Activated CD4-positive, alpha-beta T cell treated with anti-CD3 and anti-CD28 coated beads for 36 hours (primary cell): ENCODE measurements at regions of chr4 and their contacts with region 1.

Region 1: DNA sequence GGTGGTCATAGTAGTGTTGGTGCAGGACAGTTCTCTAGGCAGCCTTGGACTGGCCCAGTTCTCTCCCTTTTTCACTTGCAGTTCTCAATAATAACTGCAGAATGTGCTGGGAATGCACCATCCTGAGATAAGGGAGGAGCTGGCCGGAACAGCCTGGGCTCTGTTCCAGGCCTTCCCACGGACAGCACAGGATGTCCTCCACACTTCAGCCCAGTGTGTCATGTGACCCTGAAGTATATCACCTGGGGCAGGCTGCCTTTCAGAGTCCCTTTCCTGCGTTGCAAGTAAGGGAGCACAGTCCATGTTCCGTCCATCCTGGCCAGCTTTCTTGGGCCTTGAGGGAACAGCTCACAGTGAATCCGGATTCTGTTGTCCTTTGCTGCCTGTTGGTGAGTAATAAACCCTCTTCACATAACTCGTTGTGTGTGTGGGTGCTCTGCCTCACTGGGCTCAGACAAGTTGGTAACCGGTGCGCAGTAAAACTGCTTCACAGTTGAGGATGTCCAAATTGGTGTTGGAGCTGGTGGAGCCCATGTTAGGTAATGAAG is 32.3 kb upstream of the BBS12 start:
- DNase-seq: no peak
- ATAC-seq: peak; percentile 8
- H3K4me3 Mint-ChIP-seq: peak overlapping the region; percentile 71
- H3K27ac Mint-ChIP-seq: peak overlapping the region; percentile 93
- H3K4me1 Mint-ChIP-seq: peaks cover 59% of the 10 kb centered on the region
- H3K27me3 Mint-ChIP-seq: peaks cover 5% of the 10 kb centered on the region

Region 2: DNA sequence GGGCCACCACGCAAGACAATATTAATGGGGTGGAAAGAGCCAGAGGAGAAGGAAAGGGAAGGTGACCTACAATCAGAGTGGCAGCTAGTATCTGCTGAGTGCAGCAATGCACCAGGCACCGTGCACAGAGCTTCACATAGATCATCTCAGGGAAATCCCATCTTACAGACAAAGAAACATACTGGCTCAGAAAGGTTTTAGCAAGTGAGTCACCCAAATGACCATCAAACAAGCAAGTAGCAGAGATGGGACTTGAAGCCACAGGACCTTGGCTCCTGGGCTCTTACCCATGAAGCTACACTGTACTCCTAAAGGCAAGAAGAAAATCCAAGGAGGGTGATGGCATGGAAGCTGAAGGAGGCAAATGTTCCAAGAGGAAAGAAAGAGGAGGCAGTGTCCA is 1010.3 kb before region 1 on chr4:
- CTCF ChIA-PET with region 1: no interaction called
- POLR2A ChIA-PET with region 1: no interaction called
- intact Hi-C with region 1: no loop called
- DNase-seq: no peak
- ATAC-seq: peak; percentile 36
- H3K4me3 Mint-ChIP-seq: no peak overlapping the region
- H3K27ac Mint-ChIP-seq: no peak overlapping the region
- H3K4me1 Mint-ChIP-seq: peaks cover 21% of the 10 kb centered on the region
- H3K27me3 Mint-ChIP-seq: no peaks in the 10 kb centered on the region

Region 3: DNA sequence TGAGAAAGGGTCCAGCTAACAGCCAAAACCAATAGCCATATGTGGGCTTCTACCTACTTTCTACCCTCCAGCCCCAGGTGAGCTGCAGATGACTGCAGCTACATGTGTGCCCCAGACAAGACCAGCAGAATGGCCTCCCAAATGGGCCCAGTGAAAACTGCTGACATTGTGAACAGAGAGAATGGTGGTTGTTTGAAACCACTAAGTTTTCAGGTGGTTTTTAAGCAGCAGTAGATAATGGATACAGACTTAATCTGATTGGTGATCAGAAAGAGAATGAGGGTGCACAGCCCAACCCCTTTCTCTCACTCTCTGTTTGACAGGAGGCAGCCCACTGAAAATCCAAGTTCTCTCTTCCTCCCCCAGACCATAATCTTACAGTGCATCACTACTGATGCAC is 10.3 kb before region 1 on chr4:
- CTCF ChIA-PET with region 1: interaction called, 3 read pairs
- POLR2A ChIA-PET with region 1: no interaction called
- intact Hi-C with region 1: loop called (anchors 1 kb)
- DNase-seq: peak; percentile 49
- ATAC-seq: peak; percentile 81
- H3K4me3 Mint-ChIP-seq: no peak overlapping the region
- H3K27ac Mint-ChIP-seq: peak overlapping the region; percentile 58
- H3K4me1 Mint-ChIP-seq: peaks cover 68% of the 10 kb centered on the region
- H3K27me3 Mint-ChIP-seq: peaks cover 4% of the 10 kb centered on the region